AG04450 (cell line): ENCODE measurements at regions of chr16 and their contacts with region 1.

Region 1: GRCh38 chr16:84464967-84465553 is 39.4 kb downstream of the MEAK7 start:
- DNase-seq: no peak
- H3K4me3 ChIP-seq: no peak overlapping the region
- H3K27ac ChIP-seq: no peak overlapping the region
- H3K27me3 ChIP-seq: no peaks in the 10 kb centered on the region
- CTCF ChIP-seq: no peak

Region 2: DNA sequence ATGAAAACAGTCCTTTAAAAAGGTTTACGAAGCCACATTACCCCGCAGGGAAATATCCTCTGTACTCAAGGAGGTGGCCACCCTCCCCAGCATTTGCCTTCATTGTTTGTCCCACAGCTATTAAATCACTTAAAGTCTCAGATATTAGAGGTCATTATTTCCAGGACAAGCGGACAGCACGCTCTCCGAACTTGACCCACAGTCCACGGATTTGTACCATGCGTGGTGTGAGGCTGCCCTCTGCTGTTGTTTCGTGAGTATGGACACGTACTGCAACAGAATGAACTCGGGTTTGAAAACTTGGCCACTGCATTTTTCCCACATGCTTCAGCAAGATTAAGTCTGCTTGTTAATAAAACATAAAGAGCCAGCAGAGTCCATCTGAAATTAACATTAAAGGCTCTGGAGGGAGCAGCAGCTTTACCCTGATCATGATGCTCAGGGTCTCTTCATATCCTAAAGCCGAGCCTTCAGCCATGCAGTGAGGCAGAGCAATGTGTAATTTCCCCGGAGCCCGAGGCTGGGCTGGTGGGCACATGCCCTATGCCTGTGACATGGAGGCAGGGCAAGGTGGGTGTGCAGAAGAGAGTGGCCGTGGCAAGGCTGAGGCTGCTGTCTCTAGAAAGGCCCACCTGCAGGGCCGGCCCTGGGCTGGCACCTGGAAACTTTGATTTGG is 19.7 kb after region 1 on chr16:
- CTCF ChIA-PET with region 1: interaction called, 11 read pairs
- POLR2A ChIA-PET with region 1: interaction called, 4 read pairs
- DNase-seq: peak; percentile 36
- H3K4me3 ChIP-seq: no peak overlapping the region
- H3K27ac ChIP-seq: no peak overlapping the region
- H3K27me3 ChIP-seq: no peaks in the 10 kb centered on the region
- CTCF ChIP-seq: peak; percentile 82

Region 3: GRCh38 chr16:84569382-84569987 is 104.4 kb after region 1 on chr16:
- CTCF ChIA-PET with region 1: no interaction called
- POLR2A ChIA-PET with region 1: no interaction called
- DNase-seq: no peak
- H3K4me3 ChIP-seq: no peak overlapping the region
- H3K27ac ChIP-seq: no peak overlapping the region
- H3K27me3 ChIP-seq: no peaks in the 10 kb centered on the region
- CTCF ChIP-seq: no peak